Activated B cell treated with CpG ODN at 0.5 μM for 24 hours (primary cell): ENCODE measurements at regions of chr9 and their contacts with region 1.

Region 1: DNA sequence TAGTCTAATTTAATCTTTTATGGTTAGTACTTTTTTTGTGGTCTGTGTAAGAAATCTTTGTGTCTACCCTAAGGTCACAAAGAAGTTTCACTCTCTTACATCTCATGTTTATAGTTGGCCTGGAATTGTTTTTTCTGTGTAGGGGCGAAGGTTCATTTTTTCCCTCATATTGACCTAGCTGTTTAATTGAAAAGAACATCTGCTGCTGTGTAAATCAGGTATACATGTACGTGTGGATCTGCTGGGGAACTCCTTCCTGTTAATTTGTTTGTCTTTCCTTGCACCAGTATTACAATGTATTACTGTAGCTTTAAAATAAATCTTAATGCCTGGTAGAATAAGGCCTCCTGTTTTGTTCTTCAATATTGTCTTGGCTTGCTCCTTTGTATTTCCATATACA is 37.8 kb downstream of the EXOSC2 start:
- DNase-seq: no peak
- ATAC-seq: no peak
- H3K4me3 Mint-ChIP-seq: no peak overlapping the region
- H3K27ac Mint-ChIP-seq: no peak overlapping the region
- H3K4me1 Mint-ChIP-seq: peaks cover 4% of the 10 kb centered on the region
- H3K27me3 Mint-ChIP-seq: no peaks in the 10 kb centered on the region
- CTCF ChIP-seq: no peak

Region 2: DNA sequence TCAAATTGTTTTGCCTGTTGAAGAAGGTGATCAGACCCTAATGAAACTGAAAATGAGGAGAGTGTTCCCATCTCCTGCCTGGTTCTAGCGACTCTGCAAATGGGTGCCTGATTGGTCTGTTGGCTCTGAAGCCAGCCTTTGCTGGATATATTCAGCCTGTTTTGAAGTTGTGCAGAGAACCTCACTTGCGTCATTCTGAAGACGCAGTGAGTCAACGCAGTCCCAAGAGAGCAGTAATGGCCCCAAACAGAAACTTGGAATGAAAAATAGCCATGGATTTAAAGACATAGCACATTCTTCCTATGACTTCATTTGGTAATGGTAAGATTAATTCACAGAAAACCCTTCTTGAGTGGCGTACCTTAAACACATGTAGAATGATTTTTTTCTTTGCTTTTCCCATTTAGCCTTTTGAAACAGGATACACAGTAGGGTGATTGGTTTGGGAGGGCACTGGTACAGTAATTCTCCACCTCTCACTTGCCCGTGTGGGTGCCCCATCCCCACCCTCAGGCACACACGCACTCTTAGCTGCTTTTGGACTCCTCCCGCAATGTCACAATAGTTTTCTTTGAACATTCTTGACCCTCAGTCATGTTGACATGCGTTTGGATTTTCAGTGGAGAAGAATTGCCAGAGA is 49.6 kb after region 1 on chr9:
- CTCF ChIA-PET with region 1: no interaction called
- POLR2A ChIA-PET with region 1: interaction called, 11 read pairs
- intact Hi-C with region 1: no loop called
- DNase-seq: no peak
- ATAC-seq: no peak
- H3K4me3 Mint-ChIP-seq: no peak overlapping the region
- H3K27ac Mint-ChIP-seq: no peak overlapping the region
- H3K4me1 Mint-ChIP-seq: peaks cover 6% of the 10 kb centered on the region
- H3K27me3 Mint-ChIP-seq: no peaks in the 10 kb centered on the region
- CTCF ChIP-seq: no peak